Colonic mucosa (tissue), 4 donors: ENCODE measurements at regions of chr12 and their contacts with region 1.

Region 1: GRCh38 chr12:127108360-127109215 is 1158.4 kb upstream of the TMEM132C start:
- DNase-seq: peak; percentile 58
- H3K4me3 ChIP-seq: no peak overlapping the region
- H3K27ac ChIP-seq: no peak overlapping the region
- H3K4me1 ChIP-seq: no peaks in the 10 kb centered on the region
- H3K27me3 ChIP-seq: no peaks in the 10 kb centered on the region
- CTCF ChIP-seq: peak; percentile 54

Region 2: GRCh38 chr12:126895946-126896913 is 212.4 kb before region 1 on chr12:
- intact Hi-C with region 1: no loop called
- DNase-seq: no peak
- H3K4me3 ChIP-seq: no peak overlapping the region
- H3K27ac ChIP-seq: no peak overlapping the region
- H3K4me1 ChIP-seq: no peaks in the 10 kb centered on the region
- H3K27me3 ChIP-seq: no peaks in the 10 kb centered on the region
- CTCF ChIP-seq: no peak

Region 3: GRCh38 chr12:127293507-127294310 is 185.1 kb after region 1 on chr12:
- intact Hi-C with region 1: loop called (anchors 5 kb)
- DNase-seq: peak; percentile 40
- H3K4me3 ChIP-seq: no peak overlapping the region
- H3K27ac ChIP-seq: no peak overlapping the region
- H3K4me1 ChIP-seq: no peaks in the 10 kb centered on the region
- H3K27me3 ChIP-seq: no peaks in the 10 kb centered on the region
- CTCF ChIP-seq: peak; percentile 77

Region 4: DNA sequence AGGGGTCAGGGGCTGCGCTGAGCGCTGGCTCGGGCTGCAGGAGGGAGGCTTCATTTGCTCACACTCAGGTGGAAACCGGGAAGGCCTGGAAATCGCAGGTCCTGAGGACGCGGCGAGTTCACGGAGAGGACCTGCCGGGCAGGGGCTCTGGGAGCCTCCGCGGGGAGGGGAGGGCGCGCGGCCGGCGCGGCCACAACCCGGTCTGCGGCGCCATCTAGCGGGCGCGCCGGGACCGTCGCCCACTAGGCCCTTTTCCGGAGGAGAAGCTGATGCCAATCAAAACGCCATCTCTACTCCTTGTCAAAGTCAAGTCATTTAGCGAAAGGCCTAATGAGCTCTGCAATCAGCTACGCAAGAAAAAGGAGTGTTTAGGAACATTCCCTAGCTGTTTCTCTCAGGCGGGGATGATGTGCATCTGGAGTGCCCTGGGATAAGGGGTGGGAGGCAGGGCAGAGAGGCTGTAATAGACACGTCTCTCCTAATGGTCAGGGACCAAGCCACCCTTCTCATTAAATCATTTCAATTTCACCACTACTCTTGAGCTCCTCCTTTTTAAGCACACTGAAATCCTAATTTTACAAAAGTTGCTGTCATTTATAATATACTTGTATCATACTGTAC is 272.6 kb after region 1 on chr12:
- intact Hi-C with region 1: loop called (anchors 5 kb)
- DNase-seq: peak; percentile 29
- H3K4me3 ChIP-seq: no peak overlapping the region
- H3K27ac ChIP-seq: no peak overlapping the region
- H3K4me1 ChIP-seq: no peaks in the 10 kb centered on the region
- H3K27me3 ChIP-seq: no peaks in the 10 kb centered on the region
- CTCF ChIP-seq: peak; percentile 76